ENCODE measurements at regions of chr14 and their contacts with region 1.

Region 1: GRCh38 chr14:59245809-59246295 is 57.4 kb downstream of the DAAM1 start:
- DNase-seq: no peak
- H3K4me3 Mint-ChIP-seq: no peak overlapping the region
- H3K27ac Mint-ChIP-seq: peak overlapping the region; percentile 19
- H3K4me1 Mint-ChIP-seq: peaks cover 22% of the 10 kb centered on the region
- H3K27me3 Mint-ChIP-seq: peaks cover 2% of the 10 kb centered on the region

Region 2: GRCh38 chr14:59262717-59263454 is 17.0 kb after region 1 on chr14:
- intact Hi-C with region 1: no loop called
- DNase-seq: no peak
- H3K4me3 Mint-ChIP-seq: no peak overlapping the region
- H3K27ac Mint-ChIP-seq: no peak overlapping the region
- H3K4me1 Mint-ChIP-seq: peaks cover 29% of the 10 kb centered on the region
- H3K27me3 Mint-ChIP-seq: no peaks in the 10 kb centered on the region

Region 3: GRCh38 chr14:59275653-59276052 is 29.8 kb after region 1 on chr14:
- intact Hi-C with region 1: loop called (anchors 1 kb)
- DNase-seq: no peak
- H3K4me3 Mint-ChIP-seq: no peak overlapping the region
- H3K27ac Mint-ChIP-seq: no peak overlapping the region
- H3K4me1 Mint-ChIP-seq: peaks cover 23% of the 10 kb centered on the region
- H3K27me3 Mint-ChIP-seq: peaks cover 3% of the 10 kb centered on the region

Measured in activated T-helper 1 cell treated with anti-CD3 and anti-CD28 coated beads, Interleukin-12 subunit alpha, Interleukin-12 subunit beta, Interleukin-2, Interleukin-4 antibody, amounts not matched to agents 30 ng/mL and 10 ng/mL and 1 ng/mL, durations not matched to agents 14 hours and 24 hours and 36 hours (primary cell).